ENCODE measurements at regions of chr10 and their contacts with region 1.

Region 1: GRCh38 chr10:114304017-114304570 is 65.0 kb downstream of the VWA2 start:
- DNase-seq: peak; percentile 79 to 80
- ATAC-seq: peak; percentile 67 to 80
- H3K4me3 ChIP-seq: peak overlapping the region; percentile 29
- H3K27ac ChIP-seq: peak overlapping the region; percentile 62 to 78
- H3K4me1 ChIP-seq: peaks cover 28% of the 10 kb centered on the region
- CTCF ChIP-seq: peak; percentile 93
- EP300 ChIP-seq: no peak
- POLR2A ChIP-seq: no peak
- RAD21 ChIP-seq: peak; percentile 96 to 98

Region 2: DNA sequence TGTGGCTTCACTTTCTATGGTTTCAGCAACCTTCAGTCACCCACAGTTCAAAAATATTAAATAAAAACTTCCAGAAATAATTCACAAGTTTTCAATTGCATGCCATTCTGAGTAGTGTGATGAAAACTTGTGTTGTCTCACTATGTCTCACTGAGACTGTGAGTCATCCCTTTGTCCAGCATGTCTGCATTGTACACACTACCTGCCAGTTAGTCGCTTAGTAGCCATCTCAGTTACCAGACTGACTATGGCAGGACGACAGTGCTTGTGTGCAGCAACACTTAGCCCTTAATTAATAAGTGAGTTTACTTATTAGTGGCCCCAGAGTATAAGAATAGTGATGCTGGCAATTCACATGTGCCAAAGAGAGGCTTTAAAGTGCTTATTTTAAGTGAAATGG is 152.6 kb before region 1 on chr10:
- CTCF ChIA-PET with region 1: no interaction called
- POLR2A ChIA-PET with region 1: no interaction called
- DNase-seq: peak; percentile 53 to 68
- ATAC-seq: peak; percentile 99
- H3K4me3 ChIP-seq: no peak overlapping the region
- H3K27ac ChIP-seq: peak overlapping the region; percentile 20 to 54; a peak in 4 of 6 replicates
- H3K4me1 ChIP-seq: peaks cover 22% of the 10 kb centered on the region
- CTCF ChIP-seq: no peak
- EP300 ChIP-seq: no peak
- POLR2A ChIP-seq: no peak
- RAD21 ChIP-seq: no peak

Region 3: GRCh38 chr10:114288424-114289095 is 15.5 kb before region 1 on chr10:
- CTCF ChIA-PET with region 1: interaction called, 31 read pairs
- POLR2A ChIA-PET with region 1: no interaction called
- DNase-seq: no peak
- ATAC-seq: no peak
- H3K4me3 ChIP-seq: no peak overlapping the region
- H3K27ac ChIP-seq: no peak overlapping the region
- H3K4me1 ChIP-seq: no peaks in the 10 kb centered on the region
- CTCF ChIP-seq: no peak
- EP300 ChIP-seq: no peak
- POLR2A ChIP-seq: no peak
- RAD21 ChIP-seq: no peak

Region 4: DNA sequence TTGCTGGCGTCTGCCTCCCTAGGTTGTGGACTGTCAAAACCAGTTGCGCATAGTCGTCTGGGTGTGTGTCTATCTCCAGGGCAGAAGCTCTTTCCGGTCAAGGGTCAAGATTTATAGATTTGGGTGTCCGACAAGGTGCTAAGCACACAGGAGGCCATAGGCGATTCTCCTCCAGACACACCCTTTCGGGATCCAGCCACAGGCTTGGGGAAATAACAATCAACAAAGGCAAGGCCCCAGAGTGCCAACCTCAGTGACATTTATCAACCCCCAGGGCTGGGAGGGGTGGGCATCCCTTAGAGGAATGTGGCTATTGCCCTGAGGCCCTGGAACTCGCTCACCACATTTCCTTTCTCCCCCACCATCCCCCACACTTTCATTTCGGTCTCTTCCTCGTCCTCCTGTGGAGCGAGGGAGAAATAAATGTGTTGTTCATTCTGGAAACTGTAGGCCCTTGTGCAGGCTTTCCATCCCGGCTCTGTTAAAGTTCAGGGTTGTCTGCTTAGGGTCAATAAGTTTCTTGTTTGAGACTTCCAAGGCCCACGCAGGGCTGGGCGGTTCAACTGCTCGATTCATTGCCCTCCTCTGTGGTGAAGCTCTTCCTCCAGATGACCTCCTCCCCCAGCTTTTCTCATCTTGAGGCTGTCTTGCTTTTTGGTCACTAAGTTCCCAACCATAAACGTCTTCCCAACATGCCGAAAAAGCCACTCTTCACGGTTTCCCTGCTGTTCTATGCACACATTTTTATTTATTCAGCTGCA is 42.4 kb after region 1 on chr10:
- CTCF ChIA-PET with region 1: interaction called, 17 read pairs
- POLR2A ChIA-PET with region 1: no interaction called
- DNase-seq: no peak
- ATAC-seq: no peak; a peak in 1 of 6 replicates
- H3K4me3 ChIP-seq: no peak overlapping the region
- H3K27ac ChIP-seq: no peak overlapping the region
- H3K4me1 ChIP-seq: peaks cover 31% of the 10 kb centered on the region
- CTCF ChIP-seq: no peak
- EP300 ChIP-seq: no peak
- POLR2A ChIP-seq: no peak
- RAD21 ChIP-seq: no peak

Region 5: DNA sequence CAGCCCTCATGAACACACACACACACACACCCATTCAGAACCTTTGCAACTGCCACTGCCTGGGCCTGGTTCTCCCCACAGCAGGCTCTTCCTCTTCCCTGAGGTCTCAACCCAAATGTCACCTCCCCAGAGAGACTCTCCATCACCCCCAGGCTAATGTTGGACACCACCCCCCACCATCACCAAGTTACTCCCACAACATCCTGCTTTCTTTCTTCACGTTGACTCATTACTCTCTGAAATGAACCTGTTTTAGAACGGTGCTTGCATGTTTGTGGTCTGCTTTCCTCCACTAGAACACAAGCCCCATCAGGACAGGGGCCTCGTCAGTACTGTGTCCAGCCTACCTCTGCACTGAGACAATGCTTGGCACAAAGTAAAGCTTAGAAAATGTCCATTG is 84.2 kb after region 1 on chr10:
- CTCF ChIA-PET with region 1: interaction called, 21 read pairs
- POLR2A ChIA-PET with region 1: interaction called, 7 read pairs
- DNase-seq: no peak
- ATAC-seq: no peak
- H3K4me3 ChIP-seq: no peak overlapping the region
- H3K27ac ChIP-seq: peak overlapping the region; percentile 39 to 75; a peak in 4 of 6 replicates
- H3K4me1 ChIP-seq: peaks cover 53% of the 10 kb centered on the region
- CTCF ChIP-seq: no peak
- EP300 ChIP-seq: no peak
- POLR2A ChIP-seq: no peak
- RAD21 ChIP-seq: no peak

Region 6: DNA sequence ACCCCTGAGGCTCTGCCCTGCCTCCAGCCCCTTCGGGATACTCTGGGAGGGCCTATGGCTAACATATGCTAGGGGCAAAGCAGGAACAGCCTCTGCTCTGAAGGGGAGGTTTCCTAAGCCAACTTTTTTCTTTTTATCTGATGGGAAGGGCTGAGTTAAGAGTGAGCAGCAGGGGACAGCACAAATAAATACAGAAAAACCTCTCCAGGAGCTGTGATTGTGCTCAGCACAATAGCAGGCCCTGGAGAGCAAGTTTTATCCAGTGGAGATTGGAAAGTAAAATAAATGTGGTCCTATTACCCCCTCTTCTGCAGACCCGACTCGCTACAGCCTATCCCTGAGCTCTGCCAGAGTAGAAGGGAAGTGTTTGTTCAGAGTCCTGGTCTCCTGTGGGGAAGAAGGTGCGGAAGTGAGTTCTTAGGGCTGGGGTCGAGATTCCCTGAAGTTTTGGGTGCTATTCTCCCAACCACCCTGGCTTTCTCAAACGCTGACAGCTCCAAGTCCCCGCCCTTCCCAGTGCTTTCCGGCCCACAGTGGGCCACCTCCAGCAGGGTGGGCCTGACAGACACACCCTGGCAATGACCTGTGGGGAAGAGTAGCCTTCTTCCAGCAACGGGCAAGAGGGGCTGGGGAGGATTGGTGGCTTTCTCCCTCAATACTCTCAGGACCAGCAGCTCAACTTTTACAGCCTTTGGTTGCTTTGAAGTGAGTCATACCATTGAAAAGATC is 123.2 kb after region 1 on chr10:
- CTCF ChIA-PET with region 1: interaction called, 140 read pairs
- POLR2A ChIA-PET with region 1: no interaction called
- DNase-seq: no peak
- ATAC-seq: peak; percentile 20 to 63; a peak in 3 of 6 replicates
- H3K4me3 ChIP-seq: no peak overlapping the region
- H3K27ac ChIP-seq: no peak overlapping the region
- H3K4me1 ChIP-seq: no peaks in the 10 kb centered on the region
- CTCF ChIP-seq: no peak
- EP300 ChIP-seq: no peak
- POLR2A ChIP-seq: no peak
- RAD21 ChIP-seq: 0 out of 5 replicates have a peak, but pooled peaks of 1 of the 2 experiments have one; percentile 11

Region 7: GRCh38 chr10:114458955-114459354 is 154.9 kb after region 1 on chr10:
- CTCF ChIA-PET with region 1: interaction called, 13 read pairs
- POLR2A ChIA-PET with region 1: no interaction called
- DNase-seq: peak; percentile 40 to 71
- ATAC-seq: peak; percentile 78 to 94; a peak in 5 of 6 replicates
- H3K4me3 ChIP-seq: no peak overlapping the region
- H3K27ac ChIP-seq: no peak overlapping the region
- H3K4me1 ChIP-seq: no peaks in the 10 kb centered on the region
- CTCF ChIP-seq: peak; percentile 36; the same call in 1 of the 3 replicates
- EP300 ChIP-seq: no peak
- POLR2A ChIP-seq: no peak
- RAD21 ChIP-seq: peak; percentile 44 to 70

Region 8: DNA sequence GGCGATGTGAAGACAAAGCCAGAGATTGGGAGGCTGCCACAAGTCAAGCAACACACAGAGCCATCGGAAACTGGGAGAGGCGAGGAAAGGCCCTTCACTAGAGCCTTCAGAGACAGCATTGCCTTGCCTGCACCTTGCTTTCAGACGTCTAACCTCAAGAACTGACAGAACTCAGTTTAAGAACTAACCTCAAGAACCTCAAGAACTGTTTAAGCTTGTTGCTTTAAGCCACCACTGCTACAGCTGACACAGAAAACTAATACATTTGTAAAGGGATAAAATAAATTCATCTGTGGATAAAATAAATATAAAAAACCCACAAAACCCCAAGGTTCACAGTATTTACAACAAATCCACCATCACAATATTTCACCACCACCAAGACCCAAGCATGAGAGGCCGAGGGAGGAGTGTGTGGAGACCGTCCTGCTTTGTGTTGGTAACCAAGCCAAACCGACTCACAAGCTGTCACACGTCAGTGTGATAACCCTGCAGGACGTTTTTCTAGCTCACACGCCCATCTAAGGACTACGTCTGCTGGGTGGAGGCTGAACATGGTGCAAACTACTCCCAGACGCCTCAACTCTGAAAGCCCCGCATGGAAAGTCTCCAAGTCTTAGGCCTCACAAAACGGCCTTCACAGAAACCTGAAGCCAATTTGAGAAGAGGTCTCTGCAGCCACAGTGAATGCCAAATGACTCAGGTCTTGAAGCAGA is 237.1 kb after region 1 on chr10:
- CTCF ChIA-PET with region 1: interaction called, 11 read pairs
- POLR2A ChIA-PET with region 1: no interaction called
- DNase-seq: no peak
- ATAC-seq: no peak
- H3K4me3 ChIP-seq: no peak overlapping the region
- H3K27ac ChIP-seq: no peak overlapping the region
- H3K4me1 ChIP-seq: no peaks in the 10 kb centered on the region
- CTCF ChIP-seq: no peak
- EP300 ChIP-seq: no peak
- POLR2A ChIP-seq: no peak
- RAD21 ChIP-seq: no peak